ENCODE measurements at regions of chr17 and their contacts with region 1.

Region 1: DNA sequence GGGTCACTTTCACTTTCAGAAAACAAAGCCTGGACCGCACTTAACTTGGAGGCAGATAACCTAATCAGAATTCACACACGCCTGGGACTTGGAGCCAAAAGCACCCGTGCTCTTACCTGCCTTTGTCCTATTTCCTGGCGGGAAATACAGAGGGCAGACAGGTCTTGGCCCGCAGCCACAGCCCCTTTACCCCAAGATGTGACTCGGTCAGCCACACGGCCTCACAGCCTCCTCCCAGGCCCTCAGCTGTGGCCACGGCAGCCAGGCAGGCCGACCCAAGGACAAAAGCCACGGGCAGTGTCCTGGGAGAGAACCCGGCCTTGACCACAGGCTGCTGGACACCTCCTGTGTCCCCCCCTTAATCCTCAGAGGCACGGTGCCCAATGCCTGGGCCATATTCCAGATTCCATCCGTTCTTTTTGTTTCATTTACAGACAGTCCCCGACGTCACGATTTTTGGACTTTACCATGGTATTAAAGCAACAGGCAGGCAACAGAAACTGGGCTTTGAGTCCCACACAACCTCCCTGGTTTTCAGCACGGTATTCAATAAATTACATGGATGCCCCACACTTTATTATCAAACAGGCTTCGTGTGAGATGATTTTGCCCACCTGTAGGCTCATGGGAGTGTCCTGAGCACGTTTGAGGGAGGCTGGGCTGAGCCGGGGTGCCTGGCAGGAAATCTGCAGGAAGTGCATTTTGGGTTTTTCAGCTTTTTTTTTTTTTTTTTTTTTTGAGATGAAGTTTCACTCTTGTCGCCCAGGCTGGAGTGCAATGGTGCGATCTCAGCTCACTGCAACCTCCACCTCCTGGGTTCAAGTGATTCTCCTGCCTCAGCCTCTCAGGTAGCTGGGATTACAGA is 30.0 kb upstream of the GAA start:
- DNase-seq: peak; percentile 65 to 72
- ATAC-seq: peak; percentile 58 to 80 (median 74)
- H3K4me3 ChIP-seq: peak overlapping the region; percentile 8 to 58 (median 46)
- H3K27ac ChIP-seq: peak overlapping the region; percentile 71 to 95 (median 84)
- H3K4me1 ChIP-seq: peaks cover 17 to 44% (median 40%) of the 10 kb centered on the region in 9 donors
- H3K27me3 ChIP-seq: no peaks in the 10 kb centered on the region
- CTCF ChIP-seq: no peak

Region 2: GRCh38 chr17:80035943-80036714 is 35.2 kb before region 1 on chr17 and contains the start of gene CCDC40:
- intact Hi-C with region 1: loop called in 2 of 10 experiments (anchors 2 to 5 kb)
- DNase-seq: peak; percentile 85 to 90
- ATAC-seq: peak; percentile 94 to 98 (median 96)
- H3K4me3 ChIP-seq: peak within 1 kb of the TSS; percentile 74 to 100 (median 88)
- H3K27ac ChIP-seq: peak within 1 kb of the TSS; percentile 79 to 96 (median 92)
- H3K4me1 ChIP-seq: peaks cover 2 to 28% (median 12%) of the 10 kb centered on the region in 9 donors
- H3K27me3 ChIP-seq: peaks cover 0 to 31% (median 0%) of the 10 kb centered on the region in 7 donors
- CTCF ChIP-seq: peak in 4 of 9 donors; percentile 6 to 48 (median 22)
- total RNA-seq, gene CCDC40: 3.4 to 8.9 (median 6.8) TPM

Region 3: GRCh38 chr17:80105762-80106161 is 34.4 kb after region 1 on chr17:
- intact Hi-C with region 1: no loop called
- DNase-seq: no peak
- ATAC-seq: no peak
- H3K4me3 ChIP-seq: no peak overlapping the region
- H3K27ac ChIP-seq: no peak overlapping the region
- H3K4me1 ChIP-seq: peaks cover 0 to 18% (median 10%) of the 10 kb centered on the region in 9 donors
- H3K27me3 ChIP-seq: no peaks in the 10 kb centered on the region
- CTCF ChIP-seq: no peak

Measured in heart right ventricle (tissue), 16 donors.